ENCODE measurements at regions of chr11 and their contacts with region 1.

Region 1: GRCh38 chr11:123103326-123103980 is 41.5 kb upstream of the HSPA8 start:
- DNase-seq: peak in 29 of 35 experiments; percentile 2 to 67 (median 15)
- ATAC-seq: peak; percentile 60 to 81 (median 78)
- H3K4me3 ChIP-seq: no peak overlapping the region
- H3K4me3 Mint-ChIP-seq: no peak overlapping the region
- H3K27ac ChIP-seq: no peak overlapping the region
- H3K27ac Mint-ChIP-seq: peak overlapping the region; percentile 54 to 64
- H3K4me1 ChIP-seq: peaks cover 3 to 19% of the 10 kb centered on the region in 2 experiments
- H3K4me1 Mint-ChIP-seq: peaks cover 25 to 42% (median 31%) of the 10 kb centered on the region in 3 donors
- H3K27me3 ChIP-seq: peaks cover 0 to 6% of the 10 kb centered on the region in 2 experiments
- H3K27me3 Mint-ChIP-seq: no peaks in the 10 kb centered on the region

Region 2: GRCh38 chr11:123062158-123062891 is 41.1 kb before region 1 on chr11:
- CTCF ChIA-PET with region 1: interaction called, 5 to 12 read pairs
- POLR2A ChIA-PET with region 1: interaction called, 3 to 11 read pairs
- DNase-seq: peak; percentile 98 to 100 (median 99)
- ATAC-seq: peak; percentile 85 to 88 (median 86)
- H3K4me3 ChIP-seq: peak overlapping the region; percentile 98
- H3K4me3 Mint-ChIP-seq: peak overlapping the region; percentile 98 to 99 (median 99)
- H3K27ac ChIP-seq: peak overlapping the region; percentile 99
- H3K27ac Mint-ChIP-seq: peak overlapping the region; percentile 100
- H3K4me1 ChIP-seq: peaks cover 50 to 54% of the 10 kb centered on the region in 2 experiments
- H3K4me1 Mint-ChIP-seq: peaks cover 54 to 73% (median 64%) of the 10 kb centered on the region in 3 donors
- H3K27me3 ChIP-seq: no peaks in the 10 kb centered on the region
- H3K27me3 Mint-ChIP-seq: no peaks in the 10 kb centered on the region

Region 3: DNA sequence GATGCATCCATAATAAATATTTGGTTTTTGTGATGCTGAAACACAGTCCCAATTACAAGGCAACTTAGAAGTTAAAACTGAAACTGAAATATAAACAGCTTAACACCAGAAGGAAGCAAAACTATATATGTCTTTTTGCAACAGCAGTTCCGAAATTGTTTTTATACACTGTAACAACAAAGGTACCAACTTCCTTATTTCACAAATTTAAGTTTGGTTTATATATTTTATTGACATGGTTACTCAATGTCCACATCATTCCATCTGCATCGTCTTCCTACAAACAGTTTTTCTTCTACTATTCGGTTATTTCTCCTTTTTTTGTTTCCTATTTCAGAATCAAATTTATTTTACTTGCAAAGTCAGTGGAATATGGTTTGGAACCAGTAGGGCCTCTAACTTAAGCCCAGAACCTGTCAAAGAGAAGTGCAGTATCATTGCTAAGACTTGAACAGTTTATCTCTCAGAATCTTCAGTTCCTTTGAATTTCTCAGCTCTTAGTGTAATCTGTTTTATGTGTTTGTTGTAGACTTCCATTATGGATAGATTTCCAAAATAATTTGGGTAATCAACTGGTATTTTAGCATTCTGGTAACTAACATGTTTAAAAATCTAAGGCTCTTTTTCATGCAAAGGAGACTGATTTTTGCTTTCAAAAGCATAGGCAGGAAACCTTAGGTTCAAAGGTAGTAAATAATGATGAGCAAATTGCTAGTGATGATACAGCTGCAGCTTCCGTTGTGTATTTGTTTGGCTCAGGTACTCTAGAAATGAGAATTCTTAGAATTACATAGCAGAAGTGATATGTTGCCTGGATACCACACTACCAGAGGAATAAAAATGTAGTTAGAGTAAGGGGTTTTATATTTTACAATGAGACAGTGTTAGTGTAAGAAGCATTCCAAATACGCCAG is 33.3 kb before region 1 on chr11:
- CTCF ChIA-PET with region 1: interaction called, 8 to 25 read pairs
- POLR2A ChIA-PET with region 1: interaction called in 1 of 2 experiments, 7 read pairs
- DNase-seq: peak in 5 of 35 experiments; percentile 22 to 62 (median 27)
- ATAC-seq: peak; percentile 77 to 90 (median 86)
- H3K4me3 ChIP-seq: peak overlapping the region; percentile 27 to 39
- H3K4me3 Mint-ChIP-seq: peak overlapping the region; percentile 78 to 87 (median 83)
- H3K27ac ChIP-seq: peak overlapping the region; percentile 93
- H3K27ac Mint-ChIP-seq: peak overlapping the region; percentile 99 to 100
- H3K4me1 ChIP-seq: peaks cover 51 to 52% of the 10 kb centered on the region in 2 experiments
- H3K4me1 Mint-ChIP-seq: peaks cover 61 to 74% (median 66%) of the 10 kb centered on the region in 3 donors
- H3K27me3 ChIP-seq: no peaks in the 10 kb centered on the region
- H3K27me3 Mint-ChIP-seq: no peaks in the 10 kb centered on the region

Region 4: DNA sequence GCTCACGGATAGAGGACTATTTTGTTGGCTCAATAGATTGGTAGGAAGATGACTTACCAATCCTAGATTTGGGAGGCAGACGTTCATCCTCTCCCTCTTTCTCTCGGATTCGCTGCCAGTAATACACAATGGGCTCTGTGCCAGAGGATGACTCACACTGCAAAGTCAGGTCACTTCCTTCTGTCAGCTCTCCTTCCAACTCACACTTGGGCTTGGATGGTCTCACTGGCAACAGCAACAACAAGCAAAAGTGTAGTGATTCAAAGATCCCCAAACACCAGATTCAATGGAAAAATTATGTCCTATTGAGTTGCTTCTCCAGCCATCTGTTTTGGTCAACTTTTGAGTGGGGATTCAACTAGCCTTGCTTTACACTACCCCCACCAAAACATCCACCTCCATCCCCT is 19.8 kb before region 1 on chr11:
- CTCF ChIA-PET with region 1: interaction called, 9 to 10 read pairs
- POLR2A ChIA-PET with region 1: interaction called, 8 read pairs
- DNase-seq: peak; percentile 12 to 80 (median 50)
- ATAC-seq: peak; percentile 38 to 57 (median 50)
- H3K4me3 ChIP-seq: peak overlapping the region in 1 of 2 donors; percentile 26
- H3K4me3 Mint-ChIP-seq: peak overlapping the region; percentile 62 to 63 (median 63)
- H3K27ac ChIP-seq: peak overlapping the region; percentile 80
- H3K27ac Mint-ChIP-seq: peak overlapping the region; percentile 81 to 84
- H3K4me1 ChIP-seq: peaks cover 14 to 48% of the 10 kb centered on the region in 2 experiments
- H3K4me1 Mint-ChIP-seq: peaks cover 60 to 65% (median 62%) of the 10 kb centered on the region in 3 donors
- H3K27me3 ChIP-seq: no peaks in the 10 kb centered on the region
- H3K27me3 Mint-ChIP-seq: no peaks in the 10 kb centered on the region

Region 5: GRCh38 chr11:123174196-123175183 is 71.0 kb after region 1 on chr11:
- CTCF ChIA-PET with region 1: no interaction called
- POLR2A ChIA-PET with region 1: no interaction called
- DNase-seq: no peak
- ATAC-seq: no peak
- H3K4me3 ChIP-seq: no peak overlapping the region
- H3K4me3 Mint-ChIP-seq: no peak overlapping the region
- H3K27ac ChIP-seq: no peak overlapping the region
- H3K27ac Mint-ChIP-seq: no peak overlapping the region
- H3K4me1 ChIP-seq: no peaks in the 10 kb centered on the region
- H3K4me1 Mint-ChIP-seq: no peaks in the 10 kb centered on the region
- H3K27me3 ChIP-seq: no peaks in the 10 kb centered on the region
- H3K27me3 Mint-ChIP-seq: peaks cover 0 to 10% of the 10 kb centered on the region in 2 donors

Region 6: DNA sequence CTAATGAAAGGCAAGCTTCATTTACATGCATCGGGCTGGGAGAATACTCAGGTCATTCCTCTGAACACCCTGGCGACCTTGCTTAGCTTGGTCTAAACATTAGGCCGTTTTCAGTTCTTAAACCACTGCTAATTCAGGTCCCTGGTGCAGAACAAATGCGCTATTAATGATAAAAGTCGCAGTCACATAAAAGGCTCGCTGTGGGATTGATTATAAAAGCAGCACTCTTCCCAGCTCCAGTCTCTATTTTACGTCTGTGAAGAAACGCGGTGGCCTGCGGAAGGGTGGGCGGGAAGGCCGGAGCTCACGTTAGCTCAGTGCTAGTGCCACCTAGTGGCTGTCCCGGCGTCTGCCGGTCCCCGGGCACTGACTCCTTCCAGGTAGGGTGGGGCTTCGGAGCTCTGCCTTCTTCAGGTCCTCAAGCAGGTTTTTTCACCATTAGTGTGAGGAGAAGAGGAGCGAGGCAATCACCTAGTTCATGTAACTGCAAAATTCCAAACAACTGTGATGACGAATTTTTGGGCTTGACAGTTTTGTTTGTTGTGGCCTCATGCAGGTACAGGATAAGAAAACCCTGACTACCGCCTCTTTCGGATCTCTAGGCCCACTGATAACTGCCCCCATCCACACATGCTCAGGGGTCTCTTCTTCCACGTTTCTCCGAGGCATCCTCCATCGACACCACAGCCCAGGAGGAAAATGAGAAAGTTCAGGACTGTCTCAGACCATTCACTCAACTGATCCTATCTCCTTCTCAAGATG is 158.1 kb after region 1 on chr11:
- CTCF ChIA-PET with region 1: interaction called, 3 to 11 read pairs
- POLR2A ChIA-PET with region 1: no interaction called
- DNase-seq: peak; percentile 7 to 67 (median 40)
- ATAC-seq: peak; percentile 63 to 85 (median 68)
- H3K4me3 ChIP-seq: peak overlapping the region in 1 of 2 donors; percentile 1
- H3K4me3 Mint-ChIP-seq: peak overlapping the region in 2 of 3 donors; percentile 38 to 51
- H3K27ac ChIP-seq: no peak overlapping the region
- H3K27ac Mint-ChIP-seq: no peak overlapping the region
- H3K4me1 ChIP-seq: peaks cover 0 to 8% of the 10 kb centered on the region in 2 experiments
- H3K4me1 Mint-ChIP-seq: peaks cover 4 to 10% (median 8%) of the 10 kb centered on the region in 3 donors
- H3K27me3 ChIP-seq: peaks cover 0 to 25% of the 10 kb centered on the region in 2 experiments
- H3K27me3 Mint-ChIP-seq: peaks cover 24 to 27% of the 10 kb centered on the region in 2 donors